ENCODE measurements at regions of chr12 and their contacts with region 1.

Region 1: GRCh38 chr12:102631269-102631668 is 150.9 kb upstream of the IGF1 start:
- DNase-seq: peak; percentile 13
- H3K4me3 Mint-ChIP-seq: no peak overlapping the region
- H3K27ac Mint-ChIP-seq: no peak overlapping the region
- H3K4me1 Mint-ChIP-seq: no peaks in the 10 kb centered on the region
- H3K27me3 Mint-ChIP-seq: no peaks in the 10 kb centered on the region
- CTCF ChIP-seq: no peak

Region 2: DNA sequence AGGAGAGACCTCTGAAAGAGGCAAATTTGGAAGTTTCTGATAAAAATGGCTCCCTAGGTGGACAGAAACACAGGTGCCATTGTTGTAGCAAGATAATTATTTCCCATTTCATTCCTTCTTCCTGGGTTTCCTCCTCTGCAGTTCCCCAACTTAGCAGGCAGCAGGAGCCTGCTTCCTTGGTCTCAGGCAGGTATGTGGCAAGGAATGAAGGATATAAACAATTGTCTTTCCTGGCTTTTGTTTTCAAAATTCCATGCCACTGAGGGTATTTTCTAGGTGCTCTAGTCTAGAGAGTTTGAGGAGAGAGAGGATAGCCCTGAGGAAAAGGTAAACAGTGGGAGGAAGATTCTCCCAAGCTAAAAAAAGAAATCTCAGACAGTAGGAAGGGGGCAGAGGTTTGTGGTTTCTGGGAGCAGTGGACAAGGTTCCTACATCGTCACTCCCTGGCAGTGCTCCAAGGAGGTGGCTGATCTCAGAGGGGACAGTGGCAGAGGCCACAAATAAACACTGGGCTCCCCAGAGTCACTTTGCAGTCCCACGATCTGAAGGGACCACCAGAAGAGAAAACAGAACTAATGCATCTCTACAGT is 68.3 kb before region 1 on chr12:
- CTCF ChIA-PET with region 1: no interaction called
- intact Hi-C with region 1: loop called (anchors 5 kb)
- DNase-seq: peak; percentile 69
- H3K4me3 Mint-ChIP-seq: peak overlapping the region; percentile 11
- H3K27ac Mint-ChIP-seq: peak overlapping the region; percentile 50
- H3K4me1 Mint-ChIP-seq: peaks cover 42% of the 10 kb centered on the region
- H3K27me3 Mint-ChIP-seq: no peaks in the 10 kb centered on the region
- CTCF ChIP-seq: no peak